ENCODE measurements at regions of chr11 and their contacts with region 1.

Region 1: DNA sequence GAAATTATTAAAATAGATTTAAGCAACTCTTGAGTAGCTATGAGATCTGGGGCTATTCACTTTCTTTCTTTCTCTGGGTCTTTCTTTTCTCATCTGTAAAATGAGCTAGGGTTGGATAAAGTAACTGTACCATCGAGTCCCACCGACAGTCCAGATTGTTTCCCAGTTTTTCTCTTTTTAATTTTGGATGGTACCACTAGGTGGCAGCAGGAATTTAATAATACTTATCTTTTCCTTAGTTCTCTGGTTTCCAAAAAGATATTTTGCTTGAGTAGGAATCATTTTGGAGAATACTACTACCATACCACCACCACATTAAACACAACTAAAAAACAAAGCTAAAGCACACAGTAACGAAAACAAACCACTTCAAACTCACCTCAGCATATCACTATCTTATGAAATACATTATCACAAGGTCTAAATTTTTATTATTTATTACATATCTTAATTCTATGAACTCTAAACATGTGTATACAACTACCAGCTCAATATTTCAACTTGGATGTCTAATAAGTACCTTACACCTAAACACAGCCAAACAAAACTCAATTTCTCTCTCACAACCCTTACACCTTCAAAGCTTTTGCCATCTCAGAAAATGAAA is 584.0 kb downstream of the KCNA4 start:
- DNase-seq: peak; percentile 5
- H3K4me3 ChIP-seq: no peak overlapping the region
- H3K27ac ChIP-seq: no peak overlapping the region
- H3K4me1 ChIP-seq: no peaks in the 10 kb centered on the region
- H3K27me3 ChIP-seq: no peaks in the 10 kb centered on the region
- CTCF ChIP-seq: peak; percentile 45 to 49

Region 2: DNA sequence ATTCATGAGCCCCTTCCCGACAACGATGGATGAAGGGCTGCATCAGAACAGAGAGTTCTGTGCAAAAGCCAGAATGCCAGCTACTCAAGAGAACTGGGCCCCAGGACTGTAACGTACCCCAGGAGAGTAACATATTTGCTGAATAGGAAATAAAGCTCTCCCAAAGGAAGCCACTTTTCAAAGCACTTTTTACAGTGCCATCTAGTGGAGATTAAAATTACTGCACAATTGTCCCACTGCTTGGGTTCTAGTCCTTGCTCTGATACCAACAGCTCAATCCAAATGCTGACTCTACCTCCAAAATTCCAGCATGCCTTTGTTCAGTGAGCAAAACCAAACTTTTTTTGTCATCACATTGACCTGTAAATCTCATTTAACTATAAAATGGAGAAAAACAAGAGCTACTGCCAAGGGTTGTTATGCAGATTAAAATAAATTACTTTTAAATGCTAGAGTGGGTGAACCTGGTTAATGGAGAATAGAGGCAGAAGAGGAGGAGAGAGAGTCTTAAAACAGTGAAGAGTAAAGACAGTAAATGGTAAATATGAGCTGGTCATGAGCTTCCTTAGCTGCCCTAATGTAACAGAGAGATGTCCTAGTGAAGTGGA is 710.4 kb after region 1 on chr11:
- CTCF ChIA-PET with region 1: interaction called, 3 read pairs
- dilution Hi-C with region 1: no loop called
- in situ Hi-C with region 1: loop called in 1 of 2 experiments (anchors 25 kb)
- intact Hi-C with region 1: no loop called
- DNase-seq: peak; percentile 17
- H3K4me3 ChIP-seq: no peak overlapping the region
- H3K27ac ChIP-seq: no peak overlapping the region
- H3K4me1 ChIP-seq: no peaks in the 10 kb centered on the region
- H3K27me3 ChIP-seq: no peaks in the 10 kb centered on the region
- CTCF ChIP-seq: peak; percentile 62 to 67

Region 3: DNA sequence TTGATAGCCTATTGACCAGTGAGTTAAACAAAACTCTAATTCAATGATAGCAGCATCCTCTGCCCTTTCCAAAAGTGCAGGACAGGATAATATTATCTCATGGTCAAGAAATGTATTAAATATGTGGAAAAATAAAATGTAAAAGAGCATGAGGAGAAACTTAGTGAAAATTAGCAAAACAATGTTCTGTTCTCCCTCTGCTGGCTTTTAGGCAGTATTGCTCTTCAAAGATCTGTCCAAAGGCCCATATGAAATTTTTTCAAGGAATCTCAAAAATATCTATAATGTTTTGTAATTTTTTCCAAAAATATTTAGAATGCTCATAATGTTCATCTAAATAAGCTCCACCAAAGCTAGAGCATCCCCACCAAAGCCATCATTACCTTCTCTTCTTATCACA is 881.8 kb after region 1 on chr11:
- CTCF ChIA-PET with region 1: no interaction called
- dilution Hi-C with region 1: no loop called
- in situ Hi-C with region 1: loop called in 1 of 2 experiments (anchors 10 kb)
- intact Hi-C with region 1: loop called (anchors 2 kb)
- DNase-seq: no peak
- H3K4me3 ChIP-seq: no peak overlapping the region
- H3K27ac ChIP-seq: no peak overlapping the region
- H3K4me1 ChIP-seq: peaks cover 6% of the 10 kb centered on the region
- H3K27me3 ChIP-seq: no peaks in the 10 kb centered on the region
- CTCF ChIP-seq: peak; percentile 61 to 62

Region 4: GRCh38 chr11:30346068-30346688 is 913.4 kb after region 1 on chr11:
- CTCF ChIA-PET with region 1: no interaction called
- dilution Hi-C with region 1: no loop called
- in situ Hi-C with region 1: loop called in 1 of 2 experiments (anchors 25 kb)
- intact Hi-C with region 1: no loop called
- DNase-seq: peak; percentile 25
- H3K4me3 ChIP-seq: no peak overlapping the region
- H3K27ac ChIP-seq: no peak overlapping the region
- H3K4me1 ChIP-seq: no peaks in the 10 kb centered on the region
- H3K27me3 ChIP-seq: no peaks in the 10 kb centered on the region
- CTCF ChIP-seq: peak; percentile 57 to 59

Region 5: DNA sequence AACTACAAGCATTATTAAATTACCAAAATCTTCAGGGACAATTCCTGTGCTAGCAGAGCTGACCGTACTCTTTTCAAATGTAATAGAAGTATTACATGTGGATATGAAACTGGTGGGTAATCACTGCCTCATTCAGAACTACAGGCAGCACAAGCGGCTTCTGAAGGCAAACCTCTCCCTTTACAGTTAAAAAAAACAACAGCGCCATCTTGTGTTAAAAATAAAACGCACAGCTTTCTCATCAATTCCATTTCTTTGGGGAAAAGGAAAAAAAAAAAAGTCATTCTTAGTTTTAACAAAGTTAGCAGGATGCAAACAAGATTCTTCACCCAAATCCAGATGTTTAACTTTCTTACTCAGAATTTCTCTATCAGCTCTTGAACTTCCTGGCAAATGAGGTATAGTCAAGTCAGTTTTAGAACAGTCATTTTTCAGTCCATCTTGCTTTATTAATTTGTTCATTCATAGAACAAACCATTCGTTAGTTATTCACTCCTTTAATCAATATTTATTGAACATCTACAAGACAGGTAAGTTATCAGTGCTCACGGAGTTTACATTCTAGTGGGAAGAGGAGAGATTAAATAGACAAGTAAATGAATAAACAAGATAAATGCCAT is 1485.1 kb after region 1 on chr11:
- CTCF ChIA-PET with region 1: no interaction called
- dilution Hi-C with region 1: no loop called
- in situ Hi-C with region 1: loop called in 1 of 2 experiments (anchors 25 kb)
- intact Hi-C with region 1: no loop called
- DNase-seq: peak; percentile 26
- H3K4me3 ChIP-seq: no peak overlapping the region
- H3K27ac ChIP-seq: no peak overlapping the region
- H3K4me1 ChIP-seq: no peaks in the 10 kb centered on the region
- H3K27me3 ChIP-seq: peaks cover 4% of the 10 kb centered on the region
- CTCF ChIP-seq: peak; percentile 58 to 61